H1 (cell line): ENCODE measurements at regions of chr10 and their contacts with region 1.

Region 1: DNA sequence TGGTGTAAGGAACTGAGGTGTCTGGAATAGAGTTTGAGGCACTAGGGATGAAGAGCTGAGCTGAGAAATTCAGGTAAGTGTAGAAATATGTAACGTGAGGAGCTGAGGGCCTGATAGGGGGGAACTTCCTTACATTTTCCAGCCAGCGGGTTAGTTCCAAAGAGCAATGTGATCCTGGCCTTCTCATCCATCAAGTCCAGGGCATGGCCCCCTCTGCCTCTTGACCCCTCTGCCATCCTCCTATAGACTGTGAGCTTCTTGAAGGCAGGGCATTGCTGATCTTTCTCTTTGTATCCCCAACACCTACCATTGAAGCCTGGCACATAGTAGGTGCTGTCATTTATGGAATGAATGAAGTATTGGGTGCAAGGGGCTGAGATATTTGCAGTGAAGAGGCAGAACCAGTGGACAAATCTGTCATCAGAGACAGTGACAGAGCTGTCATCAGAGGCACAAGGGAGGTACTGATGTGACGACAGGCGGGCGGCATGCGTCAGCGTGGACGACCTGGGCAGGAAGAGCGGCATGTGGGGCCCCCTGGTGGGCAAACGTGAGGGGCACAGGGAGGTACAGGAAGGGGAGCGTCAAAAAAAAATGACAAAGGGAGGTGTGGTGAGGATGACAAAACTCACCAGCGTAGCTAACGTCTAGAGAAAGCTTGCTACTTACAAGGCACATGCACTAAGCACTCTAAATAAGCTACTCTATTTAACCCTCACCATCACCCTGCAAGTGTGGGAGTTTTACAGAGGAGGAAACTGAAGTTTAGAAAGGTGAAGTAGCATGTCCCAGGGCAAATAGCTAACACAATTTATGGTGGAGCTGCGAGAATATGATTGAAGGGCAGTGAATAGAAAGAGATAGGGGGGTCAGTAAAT is 5.2 kb upstream of the CAMK2G start:
- DNase-seq: peak; percentile 50 to 87
- H3K4me3 ChIP-seq: no peak overlapping the region
- H3K27ac ChIP-seq: no peak overlapping the region
- H3K4me1 ChIP-seq: peaks cover 0 to 8% (median 4%) of the 10 kb centered on the region in 4 experiments; a peak in 5 of 7 replicates
- H3K27me3 ChIP-seq: peaks cover 0 to 3% (median 0%) of the 10 kb centered on the region in 4 experiments; a peak in 1 of 7 replicates
- CTCF ChIP-seq: peak; percentile 89 to 95 (median 90)
- EP300 ChIP-seq: no peak
- POLR2A ChIP-seq: no peak
- RAD21 ChIP-seq: peak; percentile 78 to 90

Region 2: GRCh38 chr10:73819513-73820093 is 59.9 kb before region 1 on chr10:
- CTCF ChIA-PET with region 1: interaction called, 16 read pairs
- POLR2A ChIA-PET with region 1: no interaction called
- DNase-seq: peak in 1 of 2 experiments; percentile 59
- H3K4me3 ChIP-seq: no peak overlapping the region
- H3K27ac ChIP-seq: no peak overlapping the region
- H3K4me1 ChIP-seq: no peaks in the 10 kb centered on the region
- H3K27me3 ChIP-seq: no peaks in the 10 kb centered on the region; a peak in 1 of 7 replicates
- CTCF ChIP-seq: peak; percentile 13 to 48 (median 38); a peak in 3 of 4 replicates
- EP300 ChIP-seq: no peak
- POLR2A ChIP-seq: no peak
- RAD21 ChIP-seq: no peak; a peak in 1 of 4 replicates

Region 3: DNA sequence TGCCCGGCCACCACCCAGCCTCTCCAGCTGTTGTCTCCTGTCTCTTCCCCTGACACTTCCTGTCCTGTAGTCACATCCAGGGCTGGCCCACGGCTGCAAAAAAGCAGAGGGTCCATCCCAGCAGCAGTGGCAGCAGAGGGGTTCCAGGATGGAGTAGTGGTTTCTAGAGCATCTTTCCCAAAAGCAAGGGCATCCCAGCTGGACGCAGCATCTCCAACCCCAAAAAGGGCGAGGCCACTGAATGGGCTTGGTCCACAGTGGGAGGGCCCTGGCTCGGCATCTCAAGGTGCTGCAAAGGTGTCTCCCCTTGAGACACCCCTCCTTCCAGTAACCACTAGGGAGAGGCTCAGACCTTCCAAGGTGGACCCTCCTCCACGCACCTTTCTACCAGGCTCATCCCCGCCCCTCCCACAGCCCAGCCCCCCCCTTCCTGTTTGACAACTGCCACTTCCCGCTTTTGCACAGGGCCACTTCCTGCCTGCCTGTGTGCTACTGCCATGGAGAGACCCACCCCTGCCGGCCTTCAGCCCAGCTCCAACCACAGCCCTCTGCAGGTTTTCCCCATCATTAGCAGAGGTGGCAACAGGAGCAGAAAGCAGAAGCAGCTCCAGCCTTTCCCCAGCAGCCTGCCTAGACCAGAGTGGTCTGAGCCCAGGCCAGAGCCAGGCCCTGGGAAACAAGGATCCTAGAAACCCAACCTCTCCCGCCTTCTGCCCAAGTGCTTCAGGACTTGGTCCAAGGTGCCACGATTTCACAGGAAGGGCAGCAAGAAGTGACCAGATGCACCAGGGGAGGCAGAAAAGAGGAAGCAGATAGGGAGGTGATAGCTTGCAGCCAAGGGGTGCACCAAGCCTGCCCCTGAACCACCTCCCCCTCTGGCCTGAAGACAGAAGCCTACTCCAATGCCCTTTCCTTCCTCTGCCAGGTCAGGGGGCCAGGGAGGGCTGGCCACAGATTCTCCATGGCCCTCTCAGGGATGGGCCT is 13.8 kb before region 1 on chr10:
- CTCF ChIA-PET with region 1: interaction called, 243 read pairs
- POLR2A ChIA-PET with region 1: interaction called, 8 read pairs
- DNase-seq: no peak
- H3K4me3 ChIP-seq: no peak overlapping the region
- H3K27ac ChIP-seq: no peak overlapping the region; the same call in 1 of the 2 replicates
- H3K4me1 ChIP-seq: peaks cover 0 to 9% (median 4%) of the 10 kb centered on the region in 4 experiments; a peak in 6 of 7 replicates
- H3K27me3 ChIP-seq: no peaks in the 10 kb centered on the region
- CTCF ChIP-seq: no peak
- EP300 ChIP-seq: no peak
- POLR2A ChIP-seq: no peak
- RAD21 ChIP-seq: no peak

Region 4: GRCh38 chr10:73908853-73909538 is 29.5 kb after region 1 on chr10:
- CTCF ChIA-PET with region 1: interaction called, 103 read pairs
- POLR2A ChIA-PET with region 1: interaction called, 4 read pairs
- DNase-seq: no peak
- H3K4me3 ChIP-seq: no peak overlapping the region
- H3K27ac ChIP-seq: no peak overlapping the region
- H3K4me1 ChIP-seq: peaks cover 15 to 30% (median 24%) of the 10 kb centered on the region in 4 experiments
- H3K27me3 ChIP-seq: peaks cover 3 to 19% (median 12%) of the 10 kb centered on the region in 4 experiments; a peak in 6 of 7 replicates
- CTCF ChIP-seq: no peak
- EP300 ChIP-seq: no peak
- POLR2A ChIP-seq: no peak
- RAD21 ChIP-seq: no peak

Region 5: DNA sequence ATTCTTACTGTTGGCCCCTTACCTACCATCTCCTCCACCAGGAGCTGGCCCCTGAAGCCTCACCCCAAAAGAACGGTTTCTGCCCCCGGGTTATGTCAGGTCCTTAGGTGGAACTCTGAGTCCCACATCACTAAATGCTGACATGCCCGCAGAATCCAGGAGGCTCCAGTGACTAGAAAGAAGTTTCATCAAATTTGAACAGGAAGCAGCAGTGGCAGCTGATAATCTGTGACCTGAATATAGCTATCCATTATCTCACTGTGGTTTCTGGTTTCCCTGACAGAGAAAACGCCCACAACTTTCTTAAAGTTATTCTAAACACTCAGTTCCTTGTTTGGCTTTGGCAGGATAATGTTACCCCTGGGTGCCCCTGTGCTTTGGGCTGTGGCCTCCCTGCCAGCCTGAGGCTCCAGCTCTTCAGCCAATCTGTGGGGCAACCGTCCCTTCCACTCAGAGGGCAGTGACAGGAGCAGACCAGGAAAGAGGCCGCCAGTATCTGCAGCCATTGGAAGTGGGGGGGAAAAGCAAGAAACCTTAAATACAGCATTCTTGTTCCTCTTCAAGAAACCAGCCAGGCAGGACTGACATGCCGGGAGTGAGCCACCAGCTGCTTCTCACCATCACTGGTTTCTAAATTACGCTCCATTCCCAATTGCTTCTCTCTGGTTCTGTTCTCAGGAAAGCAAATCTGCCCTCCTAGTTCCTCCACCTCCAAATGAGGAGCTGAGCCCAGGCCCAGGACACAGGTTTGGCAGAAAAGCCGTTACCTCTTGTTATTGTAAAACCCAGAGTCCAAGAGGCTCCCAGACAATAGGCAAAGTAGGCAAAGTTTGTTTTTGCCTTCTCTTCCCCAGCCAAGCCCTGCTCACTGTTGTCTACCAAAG is 77.2 kb after region 1 on chr10:
- CTCF ChIA-PET with region 1: interaction called, 19 read pairs
- POLR2A ChIA-PET with region 1: no interaction called
- DNase-seq: no peak
- H3K4me3 ChIP-seq: no peak overlapping the region
- H3K27ac ChIP-seq: no peak overlapping the region
- H3K4me1 ChIP-seq: peaks cover 2 to 5% (median 5%) of the 10 kb centered on the region in 4 experiments
- H3K27me3 ChIP-seq: no peaks in the 10 kb centered on the region
- CTCF ChIP-seq: no peak
- EP300 ChIP-seq: no peak
- POLR2A ChIP-seq: no peak
- RAD21 ChIP-seq: no peak

Region 6: DNA sequence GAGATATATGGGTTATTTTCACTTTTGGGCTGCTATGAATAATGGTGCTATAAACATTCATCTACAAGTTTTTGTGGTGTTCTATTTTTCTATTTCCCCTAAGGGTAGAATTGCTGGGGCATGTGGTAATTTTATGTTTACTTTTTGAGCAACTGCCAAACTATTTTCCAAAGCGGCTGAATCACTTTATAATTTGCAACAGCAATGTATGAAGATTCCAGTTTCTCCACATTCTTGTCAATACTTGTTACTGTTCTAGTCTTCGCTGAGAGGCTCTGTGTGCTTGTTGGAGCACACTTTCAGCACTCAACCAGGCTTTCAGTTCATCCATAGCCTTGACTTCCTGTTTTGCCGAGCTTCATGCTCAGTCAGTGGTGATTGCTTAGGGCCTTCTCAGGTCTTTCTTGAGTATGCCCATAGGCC is 310.5 kb after region 1 on chr10:
- CTCF ChIA-PET with region 1: no interaction called
- POLR2A ChIA-PET with region 1: no interaction called
- DNase-seq: no peak
- H3K4me3 ChIP-seq: no peak overlapping the region
- H3K27ac ChIP-seq: no peak overlapping the region
- H3K4me1 ChIP-seq: peaks cover 0 to 3% (median 1%) of the 10 kb centered on the region in 4 experiments; a peak in 2 of 7 replicates
- H3K27me3 ChIP-seq: no peaks in the 10 kb centered on the region
- CTCF ChIP-seq: no peak
- EP300 ChIP-seq: no peak
- POLR2A ChIP-seq: no peak
- RAD21 ChIP-seq: no peak